Right lobe of liver (tissue), 6 donors: ENCODE measurements at regions of chr20 and their contacts with region 1.

Region 1: GRCh38 chr20:1209447-1210387 is 6.5 kb downstream of the C20orf202 start:
- DNase-seq: no peak
- ATAC-seq: no peak
- H3K4me3 ChIP-seq: no peak overlapping the region
- H3K27ac ChIP-seq: no peak overlapping the region
- H3K4me1 ChIP-seq: no peaks in the 10 kb centered on the region
- H3K27me3 ChIP-seq: no peaks in the 10 kb centered on the region
- CTCF ChIP-seq: no peak
- POLR2A ChIP-seq: no peak

Region 2: DNA sequence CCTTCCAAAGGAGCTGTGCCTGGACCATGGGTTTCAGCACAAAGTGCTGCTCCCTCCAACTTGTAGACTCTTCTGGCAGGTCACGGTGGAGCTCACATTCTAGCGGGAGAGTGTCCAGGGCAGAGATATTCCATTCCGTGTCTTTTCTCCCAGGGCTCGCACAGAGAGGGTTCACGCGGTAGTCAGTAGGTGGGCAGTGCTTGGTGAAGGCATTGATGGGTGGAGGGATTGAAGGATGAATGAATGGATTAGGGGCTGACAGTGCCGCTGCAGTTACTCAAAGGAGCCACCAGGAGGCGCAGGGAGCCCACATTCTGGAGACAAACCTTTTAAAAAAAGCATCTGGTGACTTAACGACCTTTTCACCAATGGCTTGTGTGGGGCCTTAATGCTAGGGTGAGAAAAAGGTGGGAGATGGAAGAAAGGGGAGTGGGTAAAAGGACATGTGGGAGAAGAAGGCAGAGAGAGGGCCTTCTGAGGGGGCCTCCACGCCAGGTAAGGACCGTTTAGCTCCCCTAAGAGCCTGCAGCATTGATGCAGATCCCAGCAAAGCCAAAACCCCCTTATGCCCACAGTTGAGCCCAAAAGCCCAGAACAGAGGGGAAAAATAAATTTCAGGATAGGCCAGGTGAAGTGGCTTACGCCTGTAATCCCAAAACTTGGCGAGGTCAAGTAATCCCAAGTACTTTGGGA is 393.7 kb before region 1 on chr20:
- intact Hi-C with region 1: loop called in 1 of 2 experiments (anchors 10 kb)
- DNase-seq: peak; percentile 64 to 70 (median 68)
- ATAC-seq: peak; percentile 80 to 90 (median 86)
- H3K4me3 ChIP-seq: no peak overlapping the region
- H3K27ac ChIP-seq: no peak overlapping the region
- H3K4me1 ChIP-seq: no peaks in the 10 kb centered on the region
- H3K27me3 ChIP-seq: no peaks in the 10 kb centered on the region
- CTCF ChIP-seq: peak; percentile 92 to 96 (median 93)
- POLR2A ChIP-seq: no peak

Region 3: DNA sequence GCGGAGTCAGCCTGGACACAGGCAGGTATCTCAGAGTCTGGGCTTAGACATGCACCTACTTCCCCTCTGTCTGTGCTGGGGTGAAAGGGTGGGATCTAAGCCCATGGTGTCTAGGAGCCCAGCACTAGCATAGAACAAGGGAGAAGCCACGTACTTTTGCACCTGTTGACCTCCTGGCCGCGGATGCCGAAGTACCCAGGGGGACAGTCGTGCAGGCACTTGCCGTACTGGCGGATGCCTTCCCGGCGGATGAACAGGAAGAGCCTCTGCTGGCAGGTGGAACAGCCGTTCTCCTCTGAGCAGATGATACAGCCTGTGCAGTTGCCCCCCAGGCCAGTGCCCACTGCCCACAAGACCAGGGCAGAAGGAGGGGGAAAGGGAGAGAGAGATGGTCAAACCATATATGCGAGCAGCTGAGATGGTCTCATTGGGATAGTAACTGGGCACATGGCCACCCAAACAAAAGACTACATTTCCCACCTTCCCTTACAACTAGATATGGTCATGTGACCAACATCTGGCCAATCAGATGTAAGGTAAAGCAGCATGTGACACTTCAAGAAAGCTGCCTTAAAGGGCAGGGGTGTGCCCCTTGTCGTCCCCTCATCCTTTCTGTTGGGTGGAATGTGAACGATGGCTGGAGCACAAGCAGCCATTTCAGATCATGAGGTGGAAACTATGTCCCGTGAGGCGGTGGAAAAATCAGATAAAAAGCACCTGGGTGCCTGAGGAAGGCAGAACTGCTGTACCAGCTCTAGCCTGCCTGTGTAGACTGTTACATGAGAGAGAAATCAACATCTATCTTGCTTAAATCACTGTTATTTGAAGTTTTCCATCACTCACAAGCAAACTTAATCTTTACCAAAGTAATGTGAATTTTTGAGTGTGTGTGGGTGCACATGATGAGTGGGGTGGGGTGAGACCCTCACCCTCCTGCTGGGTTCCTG is 241.6 kb before region 1 on chr20:
- intact Hi-C with region 1: loop called (anchors 10 kb)
- DNase-seq: no peak
- ATAC-seq: no peak
- H3K4me3 ChIP-seq: no peak overlapping the region
- H3K27ac ChIP-seq: no peak overlapping the region
- H3K4me1 ChIP-seq: no peaks in the 10 kb centered on the region
- H3K27me3 ChIP-seq: no peaks in the 10 kb centered on the region
- CTCF ChIP-seq: no peak
- POLR2A ChIP-seq: no peak

Region 4: DNA sequence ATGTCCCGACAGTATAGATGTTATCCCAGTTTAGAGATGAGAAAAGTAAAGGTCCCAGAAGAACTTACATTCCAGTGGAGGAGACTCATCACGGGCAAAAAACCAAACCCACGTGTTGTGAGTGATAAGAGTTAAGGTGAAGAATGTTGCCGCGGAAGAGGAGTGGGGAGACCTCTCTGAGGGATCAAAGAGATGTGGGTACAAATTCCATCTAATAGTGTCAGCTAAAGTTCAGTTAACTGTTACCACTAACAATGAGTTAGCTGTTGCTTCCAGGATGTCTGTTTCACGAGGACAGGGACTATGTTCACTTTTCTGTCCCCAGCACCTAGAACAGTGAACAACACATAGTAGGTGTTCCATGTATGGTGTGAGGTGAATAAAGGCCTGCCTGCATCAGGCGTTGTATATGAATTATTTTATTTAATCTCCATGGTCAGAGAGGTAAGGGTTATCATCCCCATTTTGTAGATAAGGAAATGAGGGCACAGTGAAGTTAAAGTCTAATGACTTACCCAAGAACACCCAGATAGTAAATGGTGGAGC is 167.8 kb before region 1 on chr20:
- intact Hi-C with region 1: no loop called
- DNase-seq: no peak
- ATAC-seq: no peak
- H3K4me3 ChIP-seq: no peak overlapping the region
- H3K27ac ChIP-seq: no peak overlapping the region
- H3K4me1 ChIP-seq: no peaks in the 10 kb centered on the region
- H3K27me3 ChIP-seq: no peaks in the 10 kb centered on the region
- CTCF ChIP-seq: no peak
- POLR2A ChIP-seq: no peak